GM12878 (cell line): ENCODE measurements at regions of chr15 and their contacts with region 1.

Region 1: DNA sequence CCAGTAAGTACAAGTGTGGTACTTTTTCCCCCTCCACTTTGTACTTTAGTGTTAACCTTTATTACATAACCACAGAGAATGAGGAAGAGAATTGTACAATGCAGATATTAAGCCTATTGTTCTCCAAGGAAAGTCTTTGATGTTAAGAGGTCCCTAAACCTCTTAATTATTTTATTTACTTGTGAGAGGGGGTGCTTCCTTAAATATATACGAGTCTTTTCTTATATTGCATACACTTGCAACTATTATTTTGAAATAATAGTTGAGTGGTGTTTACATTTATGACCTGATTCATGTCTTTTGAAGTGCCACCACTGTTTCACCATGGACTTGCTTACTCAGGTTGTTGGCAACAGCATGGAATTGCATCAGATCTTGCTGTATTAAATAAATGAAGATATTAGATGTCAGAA is 10.1 kb downstream of the USP3 start:
- DNase-seq: no peak
- ATAC-seq: 0 out of 3 replicates have a peak, but pooled peaks have one; percentile 12
- H3K4me3 ChIP-seq: 0 out of 2 replicates have a peak overlapping the region, but pooled peaks have one; percentile 21
- H3K27ac ChIP-seq: peak overlapping the region; percentile 67; the same call in 1 of the 2 replicates
- H3K4me1 ChIP-seq: peaks cover 45% of the 10 kb centered on the region
- H3K27me3 ChIP-seq: no peaks in the 10 kb centered on the region
- CTCF ChIP-seq: no peak
- EP300 ChIP-seq: no peak
- POLR2A ChIP-seq: no peak
- RAD21 ChIP-seq: no peak

Region 2: DNA sequence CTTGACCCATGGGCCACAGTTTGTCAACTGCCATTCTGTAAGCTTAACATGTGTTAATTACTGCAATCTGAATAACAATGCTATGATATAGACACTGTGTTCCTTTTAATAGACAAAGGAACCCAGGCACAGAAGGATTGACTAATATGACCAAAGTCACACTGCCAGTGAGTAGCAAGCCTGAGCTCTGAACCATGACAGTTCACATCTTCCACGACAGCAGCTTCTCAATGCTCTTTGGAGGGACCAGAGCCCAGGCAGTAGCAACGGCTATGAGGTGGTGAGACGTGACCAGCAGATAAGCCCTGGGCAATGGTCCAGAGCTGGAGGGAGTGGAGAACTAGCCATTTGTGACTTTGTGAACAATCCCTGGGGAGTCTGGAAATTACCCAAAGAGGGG is 152.3 kb before region 1 on chr15:
- CTCF ChIA-PET with region 1: no interaction called
- POLR2A ChIA-PET with region 1: no interaction called
- RAD21 ChIA-PET with region 1: no interaction called
- SMC1A ChIA-PET with region 1: no interaction called
- in situ Hi-C with region 1: no loop called
- intact Hi-C with region 1: no loop called
- DNase-seq: no peak
- ATAC-seq: peak; percentile 38; the same call in 1 of the 3 replicates
- H3K4me3 ChIP-seq: no peak overlapping the region
- H3K27ac ChIP-seq: no peak overlapping the region
- H3K4me1 ChIP-seq: peaks cover 5% of the 10 kb centered on the region; the same call in 1 of the 2 replicates
- H3K27me3 ChIP-seq: peaks cover 0 to 1% of the 10 kb centered on the region in 2 experiments; a peak in 2 of 4 replicates
- CTCF ChIP-seq: no peak
- EP300 ChIP-seq: no peak
- POLR2A ChIP-seq: no peak
- RAD21 ChIP-seq: no peak

Region 3: DNA sequence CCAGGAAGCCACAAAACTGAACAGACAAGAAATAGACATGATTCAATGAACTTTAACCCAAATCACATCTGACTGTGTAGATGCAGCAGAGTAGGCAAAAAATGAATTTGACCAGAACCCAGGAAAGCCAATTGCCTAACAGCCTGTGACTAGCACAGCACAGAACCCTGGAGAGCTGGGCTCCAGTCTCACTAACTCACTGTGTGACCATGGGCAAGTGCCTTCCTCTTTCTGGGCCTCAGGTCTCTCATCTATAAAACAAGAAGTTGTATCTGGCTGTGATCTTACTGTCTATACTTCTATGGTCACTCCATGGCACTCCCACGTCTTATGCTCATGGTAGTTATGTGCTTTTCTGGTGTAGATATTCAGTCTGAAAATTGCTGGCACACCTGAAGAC is 58.3 kb before region 1 on chr15:
- CTCF ChIA-PET with region 1: no interaction called
- POLR2A ChIA-PET with region 1: no interaction called
- RAD21 ChIA-PET with region 1: no interaction called
- SMC1A ChIA-PET with region 1: no interaction called
- in situ Hi-C with region 1: no loop called
- intact Hi-C with region 1: no loop called
- DNase-seq: no peak
- ATAC-seq: no peak
- H3K4me3 ChIP-seq: no peak overlapping the region
- H3K27ac ChIP-seq: no peak overlapping the region
- H3K4me1 ChIP-seq: no peaks in the 10 kb centered on the region
- H3K27me3 ChIP-seq: no peaks in the 10 kb centered on the region
- CTCF ChIP-seq: no peak
- EP300 ChIP-seq: no peak
- POLR2A ChIP-seq: no peak
- RAD21 ChIP-seq: no peak

Region 4: DNA sequence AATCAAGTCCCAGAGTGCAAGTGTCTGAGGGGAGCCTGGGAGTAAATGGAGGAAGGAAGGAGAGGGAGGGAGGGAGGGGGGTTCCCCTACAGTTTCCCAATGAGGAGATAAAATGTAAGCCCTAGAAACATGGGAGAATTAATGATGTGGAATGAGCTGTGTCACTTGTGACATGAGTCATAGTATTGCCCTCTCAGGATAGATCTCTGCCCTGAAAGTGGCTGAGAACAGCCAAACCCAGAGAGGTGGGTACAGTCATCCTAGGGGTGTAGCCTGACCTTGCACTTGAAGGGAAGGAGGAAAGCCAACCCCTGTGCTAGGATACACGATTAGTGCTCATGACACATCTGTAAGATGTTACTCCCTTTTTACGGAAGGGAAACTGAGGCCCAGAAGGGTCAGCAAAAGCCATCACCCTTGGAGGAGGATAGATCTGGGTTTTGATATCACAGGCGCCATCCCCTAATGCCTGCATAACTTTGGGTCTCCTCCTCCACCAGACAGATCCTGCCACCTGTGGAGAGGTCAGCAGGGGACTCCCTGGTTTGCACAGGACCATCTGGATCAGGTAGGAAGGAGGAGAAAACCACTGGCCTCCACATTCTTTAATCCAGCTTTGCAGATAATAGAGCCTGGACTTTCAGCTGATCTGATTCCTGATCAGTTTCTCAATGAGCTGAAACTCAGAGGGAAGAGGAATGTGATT is 33.3 kb before region 1 on chr15:
- CTCF ChIA-PET with region 1: interaction called, 11 read pairs
- POLR2A ChIA-PET with region 1: interaction called, 9 read pairs
- RAD21 ChIA-PET with region 1: interaction called, 10 read pairs
- SMC1A ChIA-PET with region 1: interaction called, 13 read pairs
- in situ Hi-C with region 1: no loop called
- intact Hi-C with region 1: no loop called
- DNase-seq: peak; percentile 83
- ATAC-seq: peak; percentile 60
- H3K4me3 ChIP-seq: no peak overlapping the region
- H3K27ac ChIP-seq: peak overlapping the region; percentile 77
- H3K4me1 ChIP-seq: peaks cover 88% of the 10 kb centered on the region
- H3K27me3 ChIP-seq: no peaks in the 10 kb centered on the region
- CTCF ChIP-seq: 0 out of 6 replicates have a peak, but pooled peaks of 1 of the 3 experiments have one; percentile 4
- EP300 ChIP-seq: 0 out of 4 replicates have a peak, but pooled peaks of 1 of the 2 experiments have one; percentile 23
- POLR2A ChIP-seq: no peak
- RAD21 ChIP-seq: no peak

Region 5: DNA sequence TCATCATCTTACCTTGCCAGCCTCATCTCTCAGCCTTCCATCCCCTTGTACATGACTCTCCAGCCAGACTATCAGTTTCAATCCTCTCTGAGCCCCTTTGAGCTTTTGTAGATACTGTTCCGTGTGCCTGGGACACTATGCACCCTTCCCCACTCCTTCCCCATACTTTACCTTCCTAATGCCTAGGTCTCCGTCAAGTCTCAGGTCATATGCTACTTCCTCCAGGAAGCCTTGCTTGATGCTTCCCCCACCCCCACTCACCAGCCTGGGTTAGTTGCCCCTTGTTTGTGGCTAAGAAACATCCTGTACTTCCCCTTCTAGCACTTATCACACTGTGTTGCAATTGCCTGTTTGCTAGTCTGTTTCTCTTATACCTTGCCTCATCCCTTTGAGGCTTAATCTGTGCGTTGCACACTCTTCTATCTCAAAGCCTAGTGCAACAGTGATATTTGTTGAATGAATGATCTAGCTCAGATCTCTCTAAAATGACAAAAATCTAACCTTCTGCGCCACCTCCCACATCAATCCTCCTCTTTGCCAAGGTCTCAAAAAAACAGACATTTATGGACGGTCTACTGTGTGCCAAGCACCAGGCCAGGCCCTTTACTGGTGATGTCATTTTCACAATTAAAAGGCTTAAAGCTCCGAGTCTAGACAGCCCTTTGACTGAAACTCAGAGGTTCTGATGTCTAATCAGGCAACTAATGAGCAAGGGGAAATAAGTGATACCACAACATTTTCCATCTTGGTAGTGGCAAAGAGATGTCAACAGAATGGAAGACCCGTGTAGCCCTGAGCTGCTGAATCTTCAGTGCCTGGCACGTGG is 16.7 kb before region 1 on chr15:
- CTCF ChIA-PET with region 1: interaction called, 8 read pairs
- POLR2A ChIA-PET with region 1: interaction called, 14 read pairs
- RAD21 ChIA-PET with region 1: interaction called, 8 read pairs
- SMC1A ChIA-PET with region 1: interaction called, 8 read pairs
- in situ Hi-C with region 1: no loop called
- intact Hi-C with region 1: no loop called
- DNase-seq: no peak
- ATAC-seq: peak; percentile 73
- H3K4me3 ChIP-seq: peak overlapping the region; percentile 4; the same call in 1 of the 2 replicates
- H3K27ac ChIP-seq: peak overlapping the region; percentile 80
- H3K4me1 ChIP-seq: peaks cover 69% of the 10 kb centered on the region
- H3K27me3 ChIP-seq: no peaks in the 10 kb centered on the region
- CTCF ChIP-seq: no peak
- EP300 ChIP-seq: no peak
- POLR2A ChIP-seq: no peak
- RAD21 ChIP-seq: no peak

Region 6: GRCh38 chr15:63539521-63539920 is 25.0 kb after region 1 on chr15:
- CTCF ChIA-PET with region 1: interaction called, 8 read pairs
- POLR2A ChIA-PET with region 1: interaction called, 6 read pairs
- RAD21 ChIA-PET with region 1: interaction called, 43 read pairs
- SMC1A ChIA-PET with region 1: interaction called, 130 read pairs
- in situ Hi-C with region 1: no loop called
- intact Hi-C with region 1: loop called (anchors 5 kb)
- DNase-seq: no peak
- ATAC-seq: no peak
- H3K4me3 ChIP-seq: no peak overlapping the region
- H3K27ac ChIP-seq: no peak overlapping the region
- H3K4me1 ChIP-seq: peaks cover 35% of the 10 kb centered on the region
- H3K27me3 ChIP-seq: no peaks in the 10 kb centered on the region
- CTCF ChIP-seq: no peak
- EP300 ChIP-seq: no peak
- POLR2A ChIP-seq: no peak
- RAD21 ChIP-seq: no peak